Mammary epithelial cell (primary cell): ENCODE measurements at regions of chr17 and their contacts with region 1.

Region 1: DNA sequence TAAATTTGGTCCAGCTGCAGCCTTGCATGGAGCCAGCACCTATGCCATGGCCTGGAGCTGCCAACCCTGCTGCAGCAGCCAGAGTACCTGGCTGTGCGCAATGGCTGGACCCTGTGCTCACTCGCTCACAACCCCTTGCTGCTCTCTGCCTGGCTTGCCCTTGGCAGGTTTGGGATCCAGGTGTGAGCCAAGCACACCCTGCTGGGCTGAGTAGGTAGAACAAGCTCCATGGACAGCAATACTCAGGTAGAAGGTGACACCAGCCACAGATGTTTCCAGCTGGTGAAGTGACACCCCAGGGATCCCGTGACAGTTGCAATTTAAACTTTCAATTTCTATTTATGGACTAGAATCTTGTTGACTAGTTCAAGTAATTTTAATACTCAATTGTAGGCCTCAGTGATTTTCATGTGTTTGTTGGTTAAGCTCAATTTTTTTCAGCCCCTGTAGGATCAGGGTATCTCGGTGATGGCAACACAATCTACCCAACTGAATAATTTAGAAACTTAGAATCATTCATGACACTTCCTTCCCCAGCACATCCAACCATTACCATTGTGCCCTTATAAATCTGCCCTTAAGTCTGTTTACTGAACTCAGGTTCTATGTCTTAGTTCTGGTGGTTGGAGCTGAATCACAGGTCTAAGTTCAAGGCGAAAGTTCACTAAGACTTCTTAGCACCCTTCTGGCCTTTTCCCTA is 480.0 kb downstream of the PMP22 start:
- DNase-seq: peak; percentile 40
- H3K4me3 ChIP-seq: no peak overlapping the region
- H3K27ac ChIP-seq: no peak overlapping the region
- H3K4me1 ChIP-seq: no peaks in the 10 kb centered on the region
- H3K27me3 ChIP-seq: no peaks in the 10 kb centered on the region
- CTCF ChIP-seq: peak; percentile 38 to 67

Region 2: DNA sequence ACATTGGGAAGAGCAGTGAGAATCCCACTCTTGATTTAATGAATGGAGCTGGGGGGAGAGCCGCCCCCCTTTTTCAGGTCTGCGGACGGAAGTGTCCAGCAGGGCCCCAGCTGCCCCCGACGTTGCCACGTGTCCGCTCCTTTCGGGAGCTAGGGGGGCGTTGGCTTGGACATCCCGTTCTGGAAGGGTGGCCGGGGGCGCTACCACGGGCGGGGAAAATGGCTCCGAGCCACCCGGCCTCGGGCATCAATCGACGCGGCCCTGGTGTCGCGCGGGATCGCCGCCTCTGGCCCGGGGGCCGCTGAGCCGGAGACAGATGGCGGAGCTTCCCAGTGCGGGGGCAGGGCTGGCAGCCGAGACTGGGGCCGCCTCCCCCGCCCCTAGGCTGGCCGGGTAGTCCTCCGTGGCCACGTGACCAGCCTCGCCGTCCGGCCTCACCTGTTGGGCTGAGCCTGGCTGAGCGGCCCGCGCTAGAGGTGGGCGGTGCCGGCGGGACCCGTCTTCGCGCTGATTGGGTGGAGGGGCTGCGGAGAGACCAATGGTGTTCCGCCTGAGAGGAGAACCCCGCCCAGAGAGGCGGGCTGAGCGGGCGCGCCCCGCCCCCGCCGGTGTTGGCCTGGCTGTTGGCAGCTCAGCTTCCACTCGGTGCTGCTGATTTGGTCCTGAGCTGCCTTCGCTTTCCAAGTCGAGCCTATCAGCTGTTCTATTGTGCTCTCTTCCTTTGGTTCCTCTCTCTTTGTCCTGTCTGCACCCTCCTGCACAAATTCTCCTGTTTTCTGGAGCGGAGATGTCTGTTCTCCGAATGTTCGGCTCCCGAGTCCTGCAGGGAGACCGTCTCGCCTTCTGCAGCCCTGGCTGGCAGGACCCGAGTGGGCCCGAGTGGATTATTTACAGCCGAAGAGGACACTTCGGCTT is 475.9 kb before region 1 on chr17:
- CTCF ChIA-PET with region 1: no interaction called
- dilution Hi-C with region 1: no loop called
- in situ Hi-C with region 1: no loop called
- intact Hi-C with region 1: loop called (anchors 1 kb)
- DNase-seq: peak; percentile 98
- H3K4me3 ChIP-seq: peak overlapping the region; percentile 58 to 83 (median 61)
- H3K27ac ChIP-seq: peak overlapping the region; percentile 52
- H3K4me1 ChIP-seq: peaks cover 15% of the 10 kb centered on the region
- H3K27me3 ChIP-seq: no peaks in the 10 kb centered on the region
- CTCF ChIP-seq: no peak

Region 3: GRCh38 chr17:14575471-14575953 is 209.6 kb before region 1 on chr17:
- CTCF ChIA-PET with region 1: no interaction called
- dilution Hi-C with region 1: no loop called
- in situ Hi-C with region 1: no loop called
- intact Hi-C with region 1: loop called (anchors 1 kb)
- DNase-seq: peak; percentile 18
- H3K4me3 ChIP-seq: no peak overlapping the region
- H3K27ac ChIP-seq: no peak overlapping the region
- H3K4me1 ChIP-seq: no peaks in the 10 kb centered on the region
- H3K27me3 ChIP-seq: peaks cover 7% of the 10 kb centered on the region
- CTCF ChIP-seq: no peak

Region 4: GRCh38 chr17:14712611-14713021 is 72.5 kb before region 1 on chr17:
- CTCF ChIA-PET with region 1: no interaction called
- dilution Hi-C with region 1: no loop called
- in situ Hi-C with region 1: no loop called
- intact Hi-C with region 1: no loop called
- DNase-seq: peak; percentile 12
- H3K4me3 ChIP-seq: no peak overlapping the region
- H3K27ac ChIP-seq: no peak overlapping the region
- H3K4me1 ChIP-seq: no peaks in the 10 kb centered on the region
- H3K27me3 ChIP-seq: peaks cover 4% of the 10 kb centered on the region
- CTCF ChIP-seq: no peak

Region 5: DNA sequence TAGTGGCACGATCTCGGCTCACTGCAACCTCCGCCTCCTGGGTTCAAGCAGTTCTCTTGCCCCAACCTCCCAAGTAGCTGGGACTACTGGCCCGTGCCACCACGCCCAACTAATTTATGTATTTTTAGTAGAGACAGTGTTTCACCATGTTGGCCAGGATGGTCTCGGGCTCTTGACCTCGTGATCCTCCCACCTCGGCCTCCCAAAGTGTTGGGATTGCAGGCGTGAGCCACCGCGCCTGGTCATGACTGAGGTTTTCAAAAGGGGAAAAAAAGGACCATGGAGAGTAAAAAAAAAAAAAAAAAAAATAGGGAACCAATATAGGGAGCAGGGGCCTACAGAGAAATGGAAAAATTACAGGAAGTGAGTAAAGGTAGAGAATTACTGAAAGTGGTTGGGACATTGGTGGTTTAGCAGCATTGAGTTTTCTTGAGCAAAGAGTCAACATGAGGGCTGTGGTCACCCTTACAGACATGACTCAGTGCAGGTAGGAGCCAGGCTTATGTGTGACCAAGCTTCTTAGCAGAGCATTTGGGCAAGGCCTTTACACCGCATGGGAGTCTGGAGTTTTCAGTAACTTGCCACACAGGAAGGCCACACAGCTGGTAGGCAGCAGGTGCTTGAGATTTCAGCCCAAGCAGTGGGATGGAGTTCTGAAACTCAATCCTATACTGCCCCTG is 37.0 kb before region 1 on chr17:
- CTCF ChIA-PET with region 1: no interaction called
- dilution Hi-C with region 1: loop called (anchors 5 kb)
- in situ Hi-C with region 1: no loop called
- intact Hi-C with region 1: no loop called
- DNase-seq: peak; percentile 91
- H3K4me3 ChIP-seq: no peak overlapping the region
- H3K27ac ChIP-seq: no peak overlapping the region
- H3K4me1 ChIP-seq: peaks cover 23% of the 10 kb centered on the region
- H3K27me3 ChIP-seq: no peaks in the 10 kb centered on the region
- CTCF ChIP-seq: no peak